ENCODE measurements at regions of chr2 and their contacts with region 1.

Region 1: GRCh38 chr2:98649135-98649991 is 41.0 kb downstream of the UNC50 start:
- DNase-seq: peak; percentile 60 to 89
- H3K4me3 ChIP-seq: no peak overlapping the region
- H3K27ac ChIP-seq: no peak overlapping the region
- H3K4me1 ChIP-seq: no peaks in the 10 kb centered on the region
- H3K27me3 ChIP-seq: no peaks in the 10 kb centered on the region
- CTCF ChIP-seq: peak; percentile 55 to 98 (median 97)
- EP300 ChIP-seq: no peak
- POLR2A ChIP-seq: no peak
- RAD21 ChIP-seq: peak; percentile 98 to 100

Region 2: GRCh38 chr2:98634401-98635092 is 14.8 kb before region 1 on chr2:
- CTCF ChIA-PET with region 1: interaction called, 18 read pairs
- POLR2A ChIA-PET with region 1: no interaction called
- DNase-seq: peak; percentile 17 to 65
- H3K4me3 ChIP-seq: no peak overlapping the region
- H3K27ac ChIP-seq: no peak overlapping the region
- H3K4me1 ChIP-seq: peaks cover 0 to 7% (median 1%) of the 10 kb centered on the region in 4 experiments; a peak in 3 of 7 replicates
- H3K27me3 ChIP-seq: no peaks in the 10 kb centered on the region
- CTCF ChIP-seq: peak; percentile 70 to 92 (median 80)
- EP300 ChIP-seq: no peak
- POLR2A ChIP-seq: no peak
- RAD21 ChIP-seq: peak; percentile 63 to 69

Region 3: GRCh38 chr2:98835831-98836385 is 186.5 kb after region 1 on chr2:
- CTCF ChIA-PET with region 1: interaction called, 29 read pairs
- POLR2A ChIA-PET with region 1: no interaction called
- DNase-seq: no peak
- H3K4me3 ChIP-seq: no peak overlapping the region
- H3K27ac ChIP-seq: no peak overlapping the region
- H3K4me1 ChIP-seq: peaks cover 0 to 2% (median 0%) of the 10 kb centered on the region in 4 experiments; a peak in 1 of 7 replicates
- H3K27me3 ChIP-seq: no peaks in the 10 kb centered on the region; a peak in 1 of 7 replicates
- CTCF ChIP-seq: no peak
- EP300 ChIP-seq: no peak
- POLR2A ChIP-seq: no peak
- RAD21 ChIP-seq: no peak

Region 4: GRCh38 chr2:99066075-99066958 is 417.0 kb after region 1 on chr2:
- CTCF ChIA-PET with region 1: interaction called, 11 read pairs
- POLR2A ChIA-PET with region 1: no interaction called
- DNase-seq: no peak
- H3K4me3 ChIP-seq: no peak overlapping the region
- H3K27ac ChIP-seq: no peak overlapping the region
- H3K4me1 ChIP-seq: no peaks in the 10 kb centered on the region
- H3K27me3 ChIP-seq: no peaks in the 10 kb centered on the region
- CTCF ChIP-seq: peak; percentile 47 to 55 (median 47)
- EP300 ChIP-seq: no peak
- POLR2A ChIP-seq: no peak
- RAD21 ChIP-seq: peak; percentile 74 to 76

Measured in H1 (cell line).